ENCODE measurements at regions of chr12 and their contacts with region 1.

Region 1: DNA sequence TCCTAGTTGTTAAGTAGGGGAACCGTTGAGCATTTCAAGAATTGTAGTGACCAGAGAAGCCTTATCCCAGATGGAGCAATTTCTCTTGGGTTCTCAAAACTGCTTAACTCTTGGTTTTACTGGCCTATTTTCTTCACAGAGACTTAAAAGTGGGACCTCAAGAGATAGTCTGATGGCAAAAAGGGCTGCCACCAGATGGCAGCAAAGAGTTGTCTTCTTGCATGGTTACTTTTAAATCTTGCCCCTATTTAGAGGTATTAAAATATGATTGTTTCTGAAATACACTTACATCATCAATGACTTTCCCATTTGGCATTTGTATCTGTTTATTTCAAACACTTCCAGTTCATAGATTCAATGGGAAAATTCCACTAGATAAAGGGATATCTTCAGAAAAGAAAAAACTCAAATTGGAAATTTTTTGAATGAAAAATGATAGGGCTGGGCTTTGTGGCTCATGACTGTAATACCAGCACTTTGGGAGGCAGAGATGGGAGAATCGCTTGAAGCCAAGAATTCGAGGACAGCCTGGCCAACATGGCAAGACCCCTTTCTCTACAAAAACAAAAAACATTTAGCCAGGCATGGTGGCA is 69.9 kb upstream of the CNTN1 start:
- DNase-seq: peak; percentile 46 to 69
- H3K4me3 ChIP-seq: no peak overlapping the region
- H3K27ac ChIP-seq: no peak overlapping the region
- H3K4me1 ChIP-seq: no peaks in the 10 kb centered on the region
- H3K27me3 ChIP-seq: no peaks in the 10 kb centered on the region
- CTCF ChIP-seq: peak in 2 of 3 experiments; percentile 64 to 79; a peak in 3 of 4 replicates
- EP300 ChIP-seq: no peak
- POLR2A ChIP-seq: no peak
- RAD21 ChIP-seq: peak; percentile 82 to 84

Region 2: GRCh38 chr12:40515041-40515816 is 107.1 kb before region 1 on chr12:
- CTCF ChIA-PET with region 1: no interaction called
- POLR2A ChIA-PET with region 1: no interaction called
- DNase-seq: no peak
- H3K4me3 ChIP-seq: no peak overlapping the region
- H3K27ac ChIP-seq: no peak overlapping the region
- H3K4me1 ChIP-seq: no peaks in the 10 kb centered on the region; a peak in 2 of 7 replicates
- H3K27me3 ChIP-seq: no peaks in the 10 kb centered on the region
- CTCF ChIP-seq: no peak
- EP300 ChIP-seq: no peak
- POLR2A ChIP-seq: no peak
- RAD21 ChIP-seq: no peak

Region 3: GRCh38 chr12:40662366-40662765 is 40.0 kb after region 1 on chr12:
- CTCF ChIA-PET with region 1: no interaction called
- POLR2A ChIA-PET with region 1: no interaction called
- DNase-seq: no peak
- H3K4me3 ChIP-seq: no peak overlapping the region
- H3K27ac ChIP-seq: no peak overlapping the region
- H3K4me1 ChIP-seq: no peaks in the 10 kb centered on the region
- H3K27me3 ChIP-seq: no peaks in the 10 kb centered on the region
- CTCF ChIP-seq: no peak
- EP300 ChIP-seq: no peak
- POLR2A ChIP-seq: no peak
- RAD21 ChIP-seq: no peak

Region 4: DNA sequence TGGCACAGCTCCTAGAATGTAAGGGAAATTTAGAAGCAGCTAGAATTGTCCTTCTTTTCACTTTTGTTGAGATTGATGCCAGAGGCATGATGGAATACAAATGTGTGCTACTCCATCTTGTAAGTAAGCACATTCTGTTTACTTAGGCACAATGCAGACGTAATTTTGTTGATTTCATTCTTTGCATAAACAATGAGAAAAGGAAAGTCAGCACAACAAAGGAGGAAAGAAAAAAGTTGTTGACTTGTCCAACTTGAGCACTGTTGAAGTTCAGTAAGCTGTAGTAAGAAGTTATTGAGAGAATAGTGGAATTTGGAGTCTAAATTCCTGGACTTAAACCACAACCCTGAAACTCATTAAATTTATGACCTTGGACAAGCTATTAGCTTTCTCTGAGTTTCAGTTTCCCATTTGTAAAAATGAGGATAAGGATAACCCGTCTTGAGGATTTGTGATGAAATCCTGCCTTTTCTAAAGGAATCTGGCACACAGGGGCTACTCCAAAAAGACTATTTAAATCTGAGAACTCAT is 50.5 kb after region 1 on chr12:
- CTCF ChIA-PET with region 1: no interaction called
- POLR2A ChIA-PET with region 1: no interaction called
- DNase-seq: no peak
- H3K4me3 ChIP-seq: no peak overlapping the region
- H3K27ac ChIP-seq: no peak overlapping the region
- H3K4me1 ChIP-seq: no peaks in the 10 kb centered on the region; a peak in 1 of 7 replicates
- H3K27me3 ChIP-seq: no peaks in the 10 kb centered on the region
- CTCF ChIP-seq: no peak
- EP300 ChIP-seq: no peak
- POLR2A ChIP-seq: no peak
- RAD21 ChIP-seq: no peak

Region 5: DNA sequence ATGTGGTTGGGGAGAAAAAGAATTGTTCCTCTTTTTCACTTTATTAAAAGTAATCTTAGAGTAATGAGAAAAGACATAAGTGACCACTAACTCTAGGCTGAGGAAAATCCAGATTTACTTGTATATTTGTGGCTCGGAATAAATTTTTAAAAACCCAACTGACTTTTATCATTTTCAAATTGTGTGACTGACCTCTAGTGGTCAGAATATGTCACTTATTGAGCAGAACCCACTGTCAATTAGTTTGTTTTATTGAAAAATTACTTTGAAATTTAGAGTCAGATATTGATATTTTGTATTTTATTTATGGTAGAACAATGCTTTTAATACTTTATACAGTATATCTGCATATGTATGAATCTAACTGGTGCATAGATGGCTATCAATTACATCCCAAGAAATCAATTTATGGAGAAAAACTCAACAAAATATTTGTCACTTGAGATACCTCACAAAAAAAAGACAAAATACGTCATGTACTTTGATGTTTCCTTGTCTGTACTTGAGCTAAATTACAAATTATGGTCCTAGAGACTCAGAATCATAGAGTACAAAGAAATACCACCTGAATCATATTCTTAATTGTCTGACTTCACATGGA is 299.3 kb after region 1 on chr12:
- CTCF ChIA-PET with region 1: interaction called, 15 read pairs
- POLR2A ChIA-PET with region 1: no interaction called
- DNase-seq: no peak
- H3K4me3 ChIP-seq: no peak overlapping the region
- H3K27ac ChIP-seq: no peak overlapping the region
- H3K4me1 ChIP-seq: no peaks in the 10 kb centered on the region
- H3K27me3 ChIP-seq: no peaks in the 10 kb centered on the region
- CTCF ChIP-seq: peak in 2 of 3 experiments; percentile 25 to 39; a peak in 2 of 4 replicates
- EP300 ChIP-seq: no peak
- POLR2A ChIP-seq: no peak
- RAD21 ChIP-seq: peak; percentile 60 to 74

Measured in H1 (cell line).